Left cardiac atrium (tissue), 4 donors: ENCODE measurements at regions of chrX and their contacts with region 1.

Region 1: DNA sequence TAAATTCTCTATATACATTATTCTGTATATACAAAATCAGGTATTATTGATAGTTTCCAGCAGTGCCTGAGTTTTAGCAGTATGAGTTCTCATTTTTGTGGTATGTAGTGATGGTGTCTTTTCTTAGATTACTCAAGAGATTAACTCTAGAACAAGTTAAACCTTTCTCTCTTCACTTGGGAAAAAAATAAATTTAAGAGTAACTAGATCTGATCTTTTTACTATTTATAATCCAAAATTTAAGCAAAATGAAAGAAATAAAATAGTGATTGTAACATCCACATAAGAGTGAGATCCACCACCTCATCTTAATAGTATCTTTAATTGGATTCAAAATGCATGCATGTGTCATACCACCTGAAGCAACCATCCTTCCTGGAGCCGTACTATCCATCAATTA is 124.1 kb upstream of the DDX3X start:
- DNase-seq: no peak
- ATAC-seq: no peak

Region 2: DNA sequence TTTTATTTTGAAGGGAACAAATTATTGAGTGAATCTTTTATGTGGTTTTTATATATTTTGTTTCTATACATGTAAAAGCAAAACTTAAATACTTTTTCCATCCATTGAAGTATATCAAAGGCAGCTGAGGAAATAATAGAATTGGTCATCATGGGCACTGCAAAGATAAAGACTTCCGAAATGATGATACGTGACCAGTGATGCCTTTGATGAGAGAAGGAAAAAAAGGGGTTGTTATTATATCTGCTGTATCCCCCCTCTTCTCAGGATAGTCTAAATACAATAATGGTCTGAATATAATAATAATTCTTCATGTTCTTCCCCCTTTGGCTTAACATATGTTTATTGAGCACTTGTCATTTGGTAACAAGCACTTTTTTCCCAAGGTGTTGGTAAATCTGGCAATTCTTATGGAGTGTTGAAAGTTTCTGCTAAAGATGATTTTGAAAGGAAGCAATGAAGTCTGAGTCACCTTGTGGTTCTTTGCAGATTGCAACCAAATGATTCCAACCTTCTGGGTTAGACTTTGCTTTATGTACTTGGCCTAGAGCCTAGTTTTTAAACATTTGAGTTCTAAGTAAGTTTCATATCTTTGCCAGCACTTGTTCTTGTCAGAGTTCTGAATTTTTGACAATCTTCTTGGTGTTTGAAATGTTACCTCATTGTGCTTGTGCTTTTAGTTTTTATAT is 63.8 kb before region 1 on chrX:
- intact Hi-C with region 1: loop called in 1 of 2 experiments (anchors 10 kb)
- DNase-seq: no peak
- ATAC-seq: peak in 1 of 2 donors; percentile 44

Region 3: DNA sequence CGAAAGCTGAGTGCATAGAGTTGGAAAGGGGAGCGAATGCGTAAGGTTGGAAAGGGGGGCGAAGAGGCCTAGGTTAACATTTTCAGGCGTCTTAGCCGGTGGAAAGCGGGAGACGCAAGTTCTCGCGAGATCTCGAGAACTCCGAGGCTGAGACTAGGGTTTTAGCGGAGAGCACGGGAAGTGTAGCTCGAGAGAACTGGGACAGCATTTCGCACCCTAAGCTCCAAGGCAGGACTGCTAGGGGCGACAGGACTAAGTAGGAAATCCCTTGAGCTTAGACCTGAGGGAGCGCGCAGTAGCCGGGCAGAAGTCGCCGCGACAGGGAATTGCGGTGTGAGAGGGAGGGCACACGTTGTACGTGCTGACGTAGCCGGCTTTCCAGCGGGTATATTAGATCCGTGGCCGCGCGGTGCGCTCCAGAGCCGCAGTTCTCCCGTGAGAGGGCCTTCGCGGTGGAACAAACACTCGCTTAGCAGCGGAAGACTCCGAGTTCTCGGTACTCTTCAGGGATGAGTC is 123.9 kb after region 1 on chrX and contains the start of gene DDX3X:
- intact Hi-C with region 1: no loop called
- DNase-seq: peak; percentile 93
- ATAC-seq: peak; percentile 87
- total RNA-seq, gene DDX3X: 137 to 301 TPM

Region 4: GRCh38 chrX:41350976-41351569 is 141.2 kb after region 1 on chrX:
- intact Hi-C with region 1: no loop called
- DNase-seq: no peak
- ATAC-seq: peak; percentile 31 to 50